Posterior vena cava (tissue), 2 donors: ENCODE measurements at regions of chr2 and their contacts with region 1.

Region 1: GRCh38 chr2:5150871-5151270 is 541.3 kb upstream of the SOX11 start:
- DNase-seq: no peak

Region 2: GRCh38 chr2:5315512-5315911 is 164.6 kb after region 1 on chr2:
- intact Hi-C with region 1: no loop called
- DNase-seq: no peak

Region 3: DNA sequence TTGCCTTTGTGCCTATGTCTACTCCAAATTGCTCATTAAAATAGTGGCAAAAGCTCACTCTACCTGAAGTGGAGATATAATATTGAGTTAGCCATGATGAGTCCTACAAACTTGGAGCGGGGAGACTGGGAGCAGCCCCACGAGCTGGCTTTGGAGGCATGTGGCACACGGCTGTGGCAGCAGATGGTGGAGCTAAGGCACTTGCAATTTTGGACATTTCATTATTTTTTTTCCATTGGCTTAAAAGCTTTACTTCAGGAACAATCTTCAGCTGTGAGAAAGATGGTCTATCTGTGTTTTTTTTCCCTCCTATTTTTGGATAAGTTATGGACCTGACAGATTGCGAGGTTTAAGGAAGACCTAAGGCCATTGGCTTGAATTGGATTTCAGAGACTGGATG is 1136.5 kb after region 1 on chr2:
- intact Hi-C with region 1: loop called in 1 of 2 experiments (anchors 5 kb)
- DNase-seq: no peak